Heart left ventricle (tissue), 16 donors: ENCODE measurements at regions of chr21 and their contacts with region 1.

Region 1: DNA sequence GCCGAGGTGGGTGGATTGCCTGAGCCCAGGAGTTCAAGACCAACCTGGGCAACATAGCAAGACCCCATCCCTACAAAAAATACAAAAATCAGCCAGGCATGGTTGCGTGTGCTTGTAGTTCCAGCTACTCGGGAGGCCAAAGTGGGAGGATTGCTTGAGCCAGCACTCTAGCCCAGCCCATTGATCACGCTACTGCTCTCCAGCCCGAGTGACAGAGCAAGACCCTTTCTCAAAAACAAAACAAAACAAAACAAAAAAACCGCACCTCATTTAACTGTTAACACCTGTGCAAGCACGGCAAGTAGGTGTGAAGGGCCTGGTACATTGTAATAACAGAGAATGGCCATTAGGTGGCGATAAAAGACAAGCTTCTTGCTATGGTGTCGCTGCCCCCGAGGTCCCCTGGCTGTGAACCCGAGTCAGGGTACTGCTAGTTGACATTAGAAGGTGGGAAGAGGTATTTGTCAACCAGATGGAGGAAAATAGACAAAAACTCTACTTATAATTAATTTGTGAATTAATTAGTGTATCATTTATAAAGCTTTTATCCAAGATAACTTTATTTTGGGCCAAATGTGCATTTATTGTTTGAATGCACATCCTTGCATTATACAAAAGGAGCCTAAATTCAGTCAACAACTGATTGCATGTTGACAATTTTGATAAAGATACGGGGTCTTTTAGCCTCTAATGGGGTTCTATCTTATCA is 66.5 kb downstream of the SH3BGR start:
- DNase-seq: peak in 1 of 5 donors; percentile 44
- ATAC-seq: peak; percentile 48 to 77 (median 74)
- H3K4me3 ChIP-seq: no peak overlapping the region
- H3K27ac ChIP-seq: no peak overlapping the region
- H3K4me1 ChIP-seq: peaks cover 0 to 21% (median 2%) of the 10 kb centered on the region in 12 donors
- H3K27me3 ChIP-seq: no peaks in the 10 kb centered on the region
- CTCF ChIP-seq: peak; percentile 83 to 93 (median 90)
- POLR2A ChIP-seq: no peak

Region 2: GRCh38 chr21:39479142-39479813 is 39.0 kb before region 1 on chr21:
- intact Hi-C with region 1: no loop called
- DNase-seq: no peak
- ATAC-seq: no peak
- H3K4me3 ChIP-seq: no peak overlapping the region
- H3K27ac ChIP-seq: no peak overlapping the region
- H3K4me1 ChIP-seq: peaks cover 0 to 12% (median 0%) of the 10 kb centered on the region in 12 donors
- H3K27me3 ChIP-seq: no peaks in the 10 kb centered on the region
- CTCF ChIP-seq: no peak
- POLR2A ChIP-seq: no peak

Region 3: GRCh38 chr21:39633770-39634181 is 115.5 kb after region 1 on chr21:
- intact Hi-C with region 1: loop called in 3 of 10 experiments (anchors 5 to 10 kb)
- DNase-seq: no peak
- ATAC-seq: no peak
- H3K4me3 ChIP-seq: no peak overlapping the region
- H3K27ac ChIP-seq: no peak overlapping the region
- H3K4me1 ChIP-seq: no peaks in the 10 kb centered on the region
- H3K27me3 ChIP-seq: peaks cover 0 to 7% (median 0%) of the 10 kb centered on the region in 9 donors
- CTCF ChIP-seq: no peak
- POLR2A ChIP-seq: no peak

Region 4: GRCh38 chr21:39715804-39716397 is 197.6 kb after region 1 on chr21:
- intact Hi-C with region 1: loop called (anchors 1 to 2 kb)
- DNase-seq: peak in 4 of 5 donors; percentile 29 to 55 (median 33)
- ATAC-seq: peak in 2 of 4 donors; percentile 38
- H3K4me3 ChIP-seq: no peak overlapping the region
- H3K27ac ChIP-seq: no peak overlapping the region
- H3K4me1 ChIP-seq: peaks cover 0 to 5% (median 0%) of the 10 kb centered on the region in 12 donors
- H3K27me3 ChIP-seq: no peaks in the 10 kb centered on the region
- CTCF ChIP-seq: peak; percentile 53 to 81 (median 68)
- POLR2A ChIP-seq: no peak

Region 5: GRCh38 chr21:39805988-39806387 is 287.7 kb after region 1 on chr21:
- intact Hi-C with region 1: no loop called
- DNase-seq: no peak
- ATAC-seq: no peak
- H3K4me3 ChIP-seq: no peak overlapping the region
- H3K27ac ChIP-seq: no peak overlapping the region
- H3K4me1 ChIP-seq: peaks cover 0 to 8% (median 0%) of the 10 kb centered on the region in 12 donors
- H3K27me3 ChIP-seq: no peaks in the 10 kb centered on the region
- CTCF ChIP-seq: no peak
- POLR2A ChIP-seq: no peak

Region 6: GRCh38 chr21:39867198-39867650 is 348.9 kb after region 1 on chr21 and contains the start of gene PCP4:
- intact Hi-C with region 1: loop called in 1 of 10 experiments (anchors 5 kb)
- DNase-seq: peak in 3 of 5 donors; percentile 23 to 29 (median 24)
- ATAC-seq: no peak
- H3K4me3 ChIP-seq: no peak within 1 kb of the TSS
- H3K27ac ChIP-seq: peak within 1 kb of the TSS in 1 of 12 donors; percentile 62
- H3K4me1 ChIP-seq: no peaks in the 10 kb centered on the region
- H3K27me3 ChIP-seq: no peaks in the 10 kb centered on the region
- CTCF ChIP-seq: peak; percentile 53 to 83 (median 70)
- POLR2A ChIP-seq: no peak
- total RNA-seq, gene PCP4: 0.96 to 7.7 (median 3.9) TPM